Calu3 (cell line): ENCODE measurements at regions of chr4 and their contacts with region 1.

Region 1: GRCh38 chr4:37533286-37534033 is 152.7 kb downstream of the RELL1 start:
- DNase-seq: no peak
- H3K4me3 Mint-ChIP-seq: no peak overlapping the region
- H3K27ac Mint-ChIP-seq: peak overlapping the region; percentile 27
- H3K4me1 Mint-ChIP-seq: peaks cover 18% of the 10 kb centered on the region
- H3K27me3 Mint-ChIP-seq: no peaks in the 10 kb centered on the region
- CTCF ChIP-seq: no peak

Region 2: GRCh38 chr4:37567841-37568240 is 34.4 kb after region 1 on chr4:
- CTCF ChIA-PET with region 1: no interaction called
- intact Hi-C with region 1: loop called (anchors 2 kb)
- DNase-seq: no peak
- H3K4me3 Mint-ChIP-seq: no peak overlapping the region
- H3K27ac Mint-ChIP-seq: peak overlapping the region; percentile 77
- H3K4me1 Mint-ChIP-seq: peaks cover 25% of the 10 kb centered on the region
- H3K27me3 Mint-ChIP-seq: no peaks in the 10 kb centered on the region
- CTCF ChIP-seq: no peak

Region 3: DNA sequence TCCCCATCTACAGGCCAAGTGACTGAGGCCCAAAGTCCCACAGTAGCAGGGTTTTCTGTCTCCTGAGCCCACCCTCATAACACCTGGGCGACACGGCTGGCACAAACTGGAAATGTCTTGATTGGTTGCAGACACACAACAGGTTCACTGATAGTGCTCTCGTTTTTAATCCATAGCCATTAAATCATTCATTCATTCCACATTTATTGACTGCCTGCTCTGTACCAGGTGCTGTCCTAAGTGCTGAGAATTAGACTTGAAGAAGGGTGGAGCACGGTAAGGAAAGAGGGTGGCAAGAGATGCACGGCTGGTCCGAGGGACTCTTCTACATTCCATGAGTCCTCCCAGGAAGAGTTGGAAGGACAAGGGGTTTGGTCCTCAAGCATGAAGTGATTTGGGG is 52.7 kb after region 1 on chr4:
- CTCF ChIA-PET with region 1: no interaction called
- intact Hi-C with region 1: no loop called
- DNase-seq: no peak
- H3K4me3 Mint-ChIP-seq: no peak overlapping the region
- H3K27ac Mint-ChIP-seq: no peak overlapping the region
- H3K4me1 Mint-ChIP-seq: peaks cover 28% of the 10 kb centered on the region
- H3K27me3 Mint-ChIP-seq: no peaks in the 10 kb centered on the region
- CTCF ChIP-seq: no peak